HAP-1 (cell line): ENCODE measurements at regions of chr18 and their contacts with region 1.

Region 1: GRCh38 chr18:24488824-24489493 is 28.5 kb downstream of the HRH4 start:
- DNase-seq: peak; percentile 38 to 57
- H3K4me3 ChIP-seq: no peak overlapping the region
- H3K4me1 ChIP-seq: no peaks in the 10 kb centered on the region
- H3K27me3 ChIP-seq: no peaks in the 10 kb centered on the region

Region 2: DNA sequence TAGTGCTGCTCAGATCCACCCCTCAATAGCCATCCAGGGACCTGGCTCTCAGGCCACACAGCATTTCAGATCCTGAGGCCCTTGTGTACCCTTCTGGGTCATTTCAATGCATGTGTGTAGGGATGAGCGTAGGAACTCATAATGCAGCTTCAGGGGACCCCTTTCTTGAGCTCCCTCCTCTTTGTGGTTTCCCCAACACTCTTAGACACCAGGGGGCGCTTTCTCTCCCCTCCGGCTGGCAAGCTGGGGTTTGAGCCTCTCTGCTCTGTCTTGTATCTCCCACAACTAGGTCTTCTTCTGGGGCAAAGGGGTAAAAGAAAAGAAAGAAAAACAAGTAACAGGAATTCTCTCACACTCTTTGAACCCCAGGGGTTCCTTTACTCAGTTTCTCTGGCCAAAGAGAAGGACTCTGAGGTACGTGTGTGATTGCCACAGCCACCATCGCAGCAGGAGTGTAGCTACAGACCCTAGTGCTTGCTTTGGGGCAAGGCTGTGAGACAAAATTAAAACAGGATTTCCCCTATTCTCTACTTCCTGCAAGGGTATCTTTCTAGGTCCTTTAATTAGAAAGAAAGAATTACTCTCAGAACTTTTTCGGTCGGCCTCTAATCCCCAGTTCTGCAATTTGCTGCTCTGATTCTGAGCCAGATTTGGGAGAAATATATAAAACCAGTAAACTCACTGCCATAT is 312.1 kb before region 1 on chr18:
- in situ Hi-C with region 1: loop called (anchors 10 kb)
- DNase-seq: peak; percentile 33 to 84
- H3K4me3 ChIP-seq: no peak overlapping the region
- H3K4me1 ChIP-seq: no peaks in the 10 kb centered on the region; the same call in 1 of the 2 replicates
- H3K27me3 ChIP-seq: no peaks in the 10 kb centered on the region

Region 3: DNA sequence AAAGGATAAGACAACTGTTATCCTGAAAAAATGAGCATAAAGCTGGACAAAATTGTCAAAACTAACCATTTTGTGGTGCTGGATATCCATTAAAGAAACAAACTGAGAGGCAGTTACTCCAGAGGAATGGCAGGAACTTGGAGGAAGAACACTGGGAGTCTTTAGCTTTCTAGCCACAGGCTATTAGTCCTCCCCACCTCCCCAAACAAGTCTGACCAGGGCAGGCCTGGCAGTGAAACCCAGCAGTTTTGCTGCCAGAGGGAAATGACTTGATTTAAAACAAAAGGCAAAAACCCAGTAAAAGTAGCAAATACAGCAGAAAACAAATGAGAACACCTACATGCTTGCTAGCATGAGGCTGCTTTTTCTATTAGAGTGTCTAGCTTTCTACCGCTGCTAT is 126.2 kb before region 1 on chr18:
- in situ Hi-C with region 1: loop called (anchors 5 kb)
- DNase-seq: no peak
- H3K4me3 ChIP-seq: no peak overlapping the region
- H3K4me1 ChIP-seq: no peaks in the 10 kb centered on the region
- H3K27me3 ChIP-seq: no peaks in the 10 kb centered on the region